OCI-LY7 (cell line): ENCODE measurements at regions of chr10 and their contacts with region 1.

Region 1: DNA sequence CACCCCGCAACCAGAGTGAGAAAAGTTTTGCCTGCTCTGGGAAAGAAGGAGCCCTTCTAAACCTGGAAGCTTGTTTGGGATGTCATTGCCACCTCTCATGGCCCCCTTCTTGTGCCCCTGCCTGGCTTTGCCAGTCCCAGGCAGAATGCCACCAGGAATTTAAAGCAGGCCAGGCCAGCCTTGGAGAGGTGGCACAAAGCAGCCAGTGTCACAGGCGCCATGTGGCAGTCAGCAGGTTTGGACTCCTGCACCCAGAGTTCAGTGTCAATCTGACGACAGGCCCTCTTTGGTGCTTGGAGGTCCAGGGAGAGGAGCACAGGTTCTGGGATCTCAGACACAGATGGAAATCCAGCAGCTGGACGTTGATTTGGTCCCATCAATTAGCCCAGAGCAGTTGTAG is 12.7 kb downstream of the HK1 start:
- DNase-seq: no peak
- H3K4me3 ChIP-seq: no peak overlapping the region
- H3K27ac ChIP-seq: no peak overlapping the region
- H3K4me1 ChIP-seq: no peaks in the 10 kb centered on the region
- CTCF ChIP-seq: no peak

Region 2: DNA sequence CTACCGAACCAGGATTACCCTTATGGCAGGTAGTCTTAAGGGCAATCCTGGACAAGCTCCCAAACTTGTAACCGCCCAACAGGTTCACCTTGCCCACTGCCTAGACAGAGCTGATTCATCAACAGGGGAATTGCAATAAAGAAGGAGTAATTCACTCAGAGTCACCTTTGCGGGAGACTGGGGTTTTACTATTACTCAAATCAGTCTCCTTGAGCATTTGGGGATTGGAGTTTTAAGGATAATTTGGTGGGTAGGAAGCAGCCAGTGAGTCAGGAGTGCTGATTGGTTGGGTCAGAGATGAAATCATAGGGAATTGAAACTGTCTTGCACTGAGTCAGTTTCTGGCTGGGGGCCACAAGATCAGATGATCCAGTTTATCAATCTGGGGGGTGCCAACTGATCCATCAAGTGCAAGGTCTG is 12.6 kb after region 1 on chr10:
- CTCF ChIA-PET with region 1: no interaction called
- POLR2A ChIA-PET with region 1: interaction called, 10 read pairs
- intact Hi-C with region 1: no loop called
- DNase-seq: no peak
- H3K4me3 ChIP-seq: no peak overlapping the region
- H3K27ac ChIP-seq: no peak overlapping the region
- H3K4me1 ChIP-seq: no peaks in the 10 kb centered on the region
- CTCF ChIP-seq: no peak

Region 3: GRCh38 chr10:70267161-70267933 is 976.4 kb after region 1 on chr10:
- CTCF ChIA-PET with region 1: no interaction called
- POLR2A ChIA-PET with region 1: no interaction called
- intact Hi-C with region 1: no loop called
- DNase-seq: peak; percentile 41
- H3K4me3 ChIP-seq: no peak overlapping the region
- H3K27ac ChIP-seq: no peak overlapping the region
- H3K4me1 ChIP-seq: peaks cover 21% of the 10 kb centered on the region
- CTCF ChIP-seq: peak; percentile 85